ENCODE measurements at regions of chr2 and their contacts with region 1.

Region 1: DNA sequence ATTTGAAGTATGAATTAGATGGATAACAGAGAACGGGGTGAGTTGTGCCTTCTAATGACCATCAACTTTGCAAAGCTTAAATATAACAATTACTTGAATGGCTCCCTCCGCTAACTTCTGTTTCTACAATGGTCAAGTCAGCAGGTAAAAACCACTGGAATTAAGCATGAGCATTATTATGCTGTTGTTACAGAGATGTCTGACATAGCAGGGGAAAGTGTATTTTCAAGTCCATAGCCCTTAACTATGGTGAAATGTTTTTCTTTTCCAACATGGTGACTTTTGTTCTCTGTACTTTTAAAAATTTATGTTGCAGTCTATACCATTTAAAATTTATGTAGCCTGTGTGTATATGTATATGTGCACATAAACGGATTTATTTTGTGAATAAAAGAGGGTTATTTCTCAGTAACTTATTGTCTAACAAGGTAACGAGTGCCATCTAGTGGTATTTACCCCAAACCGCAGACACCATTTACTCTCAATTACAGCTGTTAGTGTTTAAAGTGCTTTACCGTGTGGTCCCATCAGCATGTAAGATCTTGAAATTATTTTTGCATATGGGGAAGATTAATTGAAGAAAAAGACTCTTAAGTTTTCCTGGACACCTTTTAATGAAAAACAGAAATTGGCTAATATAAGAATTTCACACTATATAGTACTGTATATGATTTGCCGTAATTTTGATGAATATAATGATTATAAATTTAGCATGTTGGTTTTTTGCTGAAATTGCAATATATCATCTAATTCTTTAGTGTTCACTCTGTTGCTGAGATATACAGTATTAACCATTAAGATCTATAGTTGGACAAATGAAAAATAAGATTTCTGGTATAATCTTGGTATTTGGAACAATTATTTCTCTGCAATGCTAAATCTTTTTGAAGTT is 78.2 kb downstream of the UBE2E3 start:
- DNase-seq: peak in 1 of 2 donors; percentile 11
- ATAC-seq: no peak
- H3K4me3 ChIP-seq: no peak overlapping the region
- H3K27ac ChIP-seq: no peak overlapping the region
- H3K4me1 ChIP-seq: peaks cover 0 to 7% of the 10 kb centered on the region in 2 donors
- H3K27me3 ChIP-seq: no peaks in the 10 kb centered on the region
- CTCF ChIP-seq: peak; percentile 37 to 76 (median 69)
- POLR2A ChIP-seq: no peak

Region 2: DNA sequence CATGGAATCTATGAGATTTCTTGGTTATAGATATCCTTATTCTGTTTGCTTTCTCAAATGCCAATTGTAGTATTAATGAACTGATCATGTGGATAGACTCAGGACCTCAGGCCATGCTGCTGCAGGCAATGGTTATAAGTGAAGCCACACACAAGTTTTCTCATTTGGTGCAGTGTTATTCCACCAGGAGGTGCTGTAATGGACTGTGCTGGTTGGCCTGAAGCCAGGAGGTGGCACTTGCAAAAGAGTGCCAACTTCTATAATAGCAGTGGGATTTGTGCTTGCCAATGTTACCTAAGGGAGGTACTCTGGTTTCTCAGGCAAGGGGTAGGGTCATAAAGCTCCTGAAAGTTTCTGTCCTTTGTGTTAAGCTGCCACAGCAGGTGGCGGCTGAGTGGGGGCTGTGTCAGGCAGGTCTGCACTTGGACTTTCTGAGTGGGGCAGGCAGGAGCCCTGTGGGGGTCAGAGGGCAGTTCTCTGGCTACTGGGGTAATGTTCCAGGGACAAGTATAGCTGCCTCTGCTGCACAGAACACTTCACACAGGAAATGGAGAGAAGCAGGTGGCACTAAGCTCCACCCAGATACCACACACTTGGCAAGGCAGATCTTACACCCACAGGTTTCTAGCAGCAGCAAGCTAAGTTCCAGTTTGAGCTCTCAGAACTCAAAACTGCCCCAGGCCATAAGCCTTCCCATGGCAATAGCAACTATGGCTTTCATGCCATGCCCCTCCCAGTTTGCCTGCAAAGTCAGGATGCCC is 698.9 kb before region 1 on chr2:
- in situ Hi-C with region 1: no loop called
- intact Hi-C with region 1: no loop called
- DNase-seq: no peak
- ATAC-seq: no peak
- H3K4me3 ChIP-seq: no peak overlapping the region
- H3K27ac ChIP-seq: no peak overlapping the region
- H3K4me1 ChIP-seq: no peaks in the 10 kb centered on the region
- H3K27me3 ChIP-seq: no peaks in the 10 kb centered on the region
- CTCF ChIP-seq: no peak
- POLR2A ChIP-seq: no peak

Region 3: GRCh38 chr2:180520206-180520605 is 538.4 kb before region 1 on chr2:
- in situ Hi-C with region 1: no loop called
- intact Hi-C with region 1: loop called (anchors 2 kb)
- DNase-seq: no peak
- ATAC-seq: no peak
- H3K4me3 ChIP-seq: no peak overlapping the region
- H3K27ac ChIP-seq: no peak overlapping the region
- H3K4me1 ChIP-seq: no peaks in the 10 kb centered on the region
- H3K27me3 ChIP-seq: no peaks in the 10 kb centered on the region
- CTCF ChIP-seq: peak in 1 of 5 experiments; percentile 13
- POLR2A ChIP-seq: no peak

Region 4: DNA sequence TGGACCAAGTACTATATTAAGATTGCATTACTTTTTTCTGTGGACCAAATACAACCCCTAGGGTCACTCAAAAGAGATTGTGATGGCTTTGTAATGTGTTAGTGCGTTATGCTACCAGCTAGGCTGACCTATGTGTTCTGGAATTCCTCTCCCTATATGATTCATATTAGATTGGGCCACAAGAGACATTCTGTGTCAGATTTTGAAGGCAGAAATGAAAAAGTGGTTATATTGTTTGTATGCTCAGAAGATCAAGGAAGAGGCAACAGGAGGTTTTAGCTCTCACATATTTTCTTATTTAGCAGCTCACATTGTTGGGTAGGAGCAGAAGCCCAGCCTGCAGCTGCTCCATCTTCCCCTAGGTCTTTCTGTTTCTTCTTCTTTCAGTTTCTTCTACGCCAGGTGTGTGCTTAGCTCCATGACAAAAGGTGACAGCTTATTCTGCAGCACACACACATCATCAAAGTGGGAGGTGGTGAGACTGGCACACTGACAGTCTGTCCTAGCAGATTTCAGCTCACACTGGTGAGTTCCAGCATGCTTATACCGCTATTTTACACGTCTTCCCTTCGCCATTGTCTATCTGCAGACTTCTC is 235.0 kb before region 1 on chr2:
- in situ Hi-C with region 1: no loop called
- intact Hi-C with region 1: no loop called
- DNase-seq: no peak
- ATAC-seq: no peak
- H3K4me3 ChIP-seq: no peak overlapping the region
- H3K27ac ChIP-seq: no peak overlapping the region
- H3K4me1 ChIP-seq: no peaks in the 10 kb centered on the region
- H3K27me3 ChIP-seq: no peaks in the 10 kb centered on the region
- CTCF ChIP-seq: no peak
- POLR2A ChIP-seq: no peak

Measured in gastrocnemius medialis (tissue), 4 donors.